ENCODE measurements at regions of chr10 and their contacts with region 1.

Region 1: GRCh38 chr10:35563261-35563891 is 41.8 kb upstream of the GJD4 start:
- DNase-seq: peak; percentile 79
- H3K4me3 ChIP-seq: no peak overlapping the region
- H3K27ac ChIP-seq: no peak overlapping the region
- H3K4me1 ChIP-seq: peaks cover 15% of the 10 kb centered on the region
- H3K27me3 ChIP-seq: no peaks in the 10 kb centered on the region

Region 2: GRCh38 chr10:35040760-35041501 is 522.4 kb before region 1 on chr10:
- in situ Hi-C with region 1: no loop called
- DNase-seq: peak; percentile 75
- H3K4me3 ChIP-seq: no peak overlapping the region
- H3K27ac ChIP-seq: peak overlapping the region; percentile 78
- H3K4me1 ChIP-seq: peaks cover 39% of the 10 kb centered on the region
- H3K27me3 ChIP-seq: no peaks in the 10 kb centered on the region

Region 3: DNA sequence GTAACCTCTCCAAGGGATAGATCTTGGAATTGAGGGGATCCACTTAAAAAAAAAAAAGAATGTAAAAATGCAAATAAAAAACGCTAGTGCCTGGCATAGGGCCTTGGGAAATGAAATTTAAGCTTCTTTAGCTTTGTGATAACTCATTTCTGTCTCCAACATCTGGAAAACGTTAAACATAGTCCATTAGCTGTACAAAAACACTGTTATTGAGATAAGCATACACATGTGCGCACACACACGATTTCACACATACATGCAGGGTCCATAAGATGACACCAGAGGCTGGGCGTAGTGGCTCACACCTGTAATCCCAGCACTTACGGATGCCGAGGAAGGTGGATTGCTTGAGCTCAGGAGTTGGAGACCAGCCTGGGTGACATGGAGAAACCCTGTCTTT is 459.5 kb before region 1 on chr10:
- in situ Hi-C with region 1: loop called (anchors 25 kb)
- DNase-seq: no peak
- H3K4me3 ChIP-seq: no peak overlapping the region
- H3K27ac ChIP-seq: no peak overlapping the region
- H3K4me1 ChIP-seq: no peaks in the 10 kb centered on the region
- H3K27me3 ChIP-seq: no peaks in the 10 kb centered on the region

Region 4: DNA sequence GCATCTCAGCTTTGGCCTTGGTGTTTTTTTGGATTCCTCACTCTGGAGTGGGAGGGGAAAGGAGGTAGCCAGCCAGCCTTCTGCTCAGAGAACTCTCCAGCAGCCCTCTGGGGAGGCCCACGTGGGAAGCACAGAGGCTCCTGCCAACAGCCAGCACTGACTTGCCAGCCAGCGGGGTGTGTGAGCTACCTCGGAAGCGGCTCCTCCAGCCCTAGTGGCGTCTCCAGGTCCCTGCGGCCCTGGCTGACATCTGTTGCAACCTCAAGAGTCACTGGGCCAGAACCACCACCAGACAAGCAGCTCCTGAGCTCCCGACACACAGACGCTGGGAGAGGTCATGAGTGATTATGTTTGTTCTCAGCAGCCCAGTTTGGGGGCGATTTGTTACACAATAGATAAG is 258.9 kb after region 1 on chr10:
- in situ Hi-C with region 1: no loop called
- DNase-seq: peak; percentile 97
- H3K4me3 ChIP-seq: no peak overlapping the region
- H3K27ac ChIP-seq: peak overlapping the region; percentile 64
- H3K4me1 ChIP-seq: peaks cover 11% of the 10 kb centered on the region
- H3K27me3 ChIP-seq: no peaks in the 10 kb centered on the region

Region 5: GRCh38 chr10:37109000-37109399 is 1545.6 kb after region 1 on chr10:
- in situ Hi-C with region 1: no loop called
- DNase-seq: no peak
- H3K4me3 ChIP-seq: no peak overlapping the region
- H3K27ac ChIP-seq: no peak overlapping the region
- H3K4me1 ChIP-seq: no peaks in the 10 kb centered on the region
- H3K27me3 ChIP-seq: no peaks in the 10 kb centered on the region